AG04449 (cell line): ENCODE measurements at regions of chr7 and their contacts with region 1.

Region 1: GRCh38 chr7:137801003-137801402 is 45.8 kb downstream of the DGKI start:
- DNase-seq: no peak
- H3K4me3 ChIP-seq: no peak overlapping the region
- CTCF ChIP-seq: no peak

Region 2: DNA sequence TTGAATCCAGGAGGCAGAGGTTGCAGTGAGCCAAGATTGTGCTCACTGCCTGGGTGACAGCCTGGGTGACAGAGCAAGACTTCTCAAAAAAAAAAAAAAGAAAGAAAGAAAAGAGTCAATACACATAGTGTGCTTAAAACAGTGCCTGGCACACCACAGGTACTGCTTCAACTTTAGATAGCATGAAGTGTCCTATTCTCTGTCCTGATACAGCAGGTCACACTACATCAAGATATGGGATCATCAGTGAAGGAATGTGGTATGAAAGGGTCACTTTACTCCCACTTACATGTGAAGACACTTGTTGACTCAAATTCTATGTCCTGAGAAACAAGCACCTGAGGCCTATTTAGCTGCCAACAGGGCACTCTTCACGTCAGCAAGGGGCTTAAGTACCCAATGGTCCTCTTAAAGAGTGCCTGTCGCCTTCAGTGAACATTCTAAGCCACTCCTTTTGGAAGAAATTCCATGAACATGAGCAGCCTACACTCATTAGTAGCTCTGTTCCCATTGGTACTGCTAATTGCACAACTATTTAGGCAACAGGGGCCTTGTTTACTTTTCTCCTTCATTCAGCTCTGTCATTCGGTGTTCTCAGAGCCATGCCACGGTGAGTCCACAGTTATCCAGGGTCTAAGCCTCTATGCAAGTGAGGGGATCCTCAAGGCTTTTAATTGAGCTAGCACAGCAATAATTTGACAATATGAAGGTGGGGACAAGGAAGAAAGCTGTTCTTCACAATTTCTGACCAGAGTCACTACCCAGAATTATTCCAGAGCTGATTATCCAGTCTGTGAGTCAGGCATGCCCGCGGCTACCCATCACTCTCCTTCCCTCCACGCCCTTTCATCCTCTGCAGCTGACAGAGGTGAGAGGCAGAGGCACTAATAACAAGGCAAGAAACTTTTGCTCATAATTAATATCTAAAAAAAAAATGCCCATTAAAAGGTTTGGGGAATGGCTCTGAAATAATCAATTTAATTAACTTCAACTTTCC is 400.9 kb before region 1 on chr7:
- CTCF ChIA-PET with region 1: no interaction called
- POLR2A ChIA-PET with region 1: no interaction called
- DNase-seq: peak; percentile 17
- H3K4me3 ChIP-seq: no peak overlapping the region
- CTCF ChIP-seq: no peak

Region 3: DNA sequence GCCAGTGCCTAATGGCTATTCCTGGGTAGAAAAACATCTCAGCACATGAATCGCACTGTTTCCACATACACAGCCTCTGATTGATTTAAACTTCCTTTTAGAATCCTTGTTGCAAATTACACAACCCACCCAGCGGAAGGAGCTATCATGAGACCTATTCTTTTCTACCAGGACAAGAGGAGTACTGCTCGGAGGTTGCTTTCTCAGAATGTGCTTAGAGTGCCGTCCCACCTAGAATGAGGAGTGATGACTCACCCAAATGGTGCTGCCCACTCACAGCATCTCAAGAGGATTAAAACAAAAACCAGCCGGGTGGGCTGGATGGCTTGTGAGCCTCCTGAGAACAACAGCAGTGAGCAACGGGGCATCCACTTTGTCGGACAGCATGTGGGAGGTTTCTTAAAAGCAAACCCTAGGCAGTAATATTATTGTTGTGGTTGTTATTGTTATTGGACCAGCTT is 83.2 kb before region 1 on chr7:
- CTCF ChIA-PET with region 1: no interaction called
- POLR2A ChIA-PET with region 1: no interaction called
- DNase-seq: no peak
- H3K4me3 ChIP-seq: no peak overlapping the region
- CTCF ChIP-seq: no peak

Region 4: DNA sequence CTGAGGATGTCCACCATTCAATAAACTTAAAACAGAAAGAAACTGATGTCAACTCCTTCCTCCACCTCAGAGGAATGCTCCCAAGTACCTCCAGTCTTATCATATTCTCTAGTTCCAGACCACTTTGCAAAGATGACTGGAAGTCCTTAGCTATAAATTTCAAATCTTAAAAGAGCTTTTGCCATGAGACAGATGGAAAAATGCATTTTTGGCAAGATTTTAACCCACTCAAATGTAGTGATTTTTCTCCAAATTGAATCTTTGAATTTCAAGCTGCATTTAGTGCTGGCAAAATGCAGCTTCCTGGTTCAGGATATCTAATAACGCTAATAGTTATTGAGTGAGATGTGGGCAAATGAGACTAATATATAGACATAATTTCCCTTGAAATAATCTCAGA is 12.5 kb after region 1 on chr7:
- CTCF ChIA-PET with region 1: interaction called, 12 read pairs
- POLR2A ChIA-PET with region 1: no interaction called
- DNase-seq: no peak
- H3K4me3 ChIP-seq: no peak overlapping the region
- CTCF ChIP-seq: no peak